Activated CD4-positive, alpha-beta memory T cell treated with anti-CD3 and anti-CD28 coated beads, Interleukin-2, amount 10 ng/mL, durations not matched to agents 7 days and 5 days (primary cell): ENCODE measurements at regions of chr10 and their contacts with region 1.

Region 1: DNA sequence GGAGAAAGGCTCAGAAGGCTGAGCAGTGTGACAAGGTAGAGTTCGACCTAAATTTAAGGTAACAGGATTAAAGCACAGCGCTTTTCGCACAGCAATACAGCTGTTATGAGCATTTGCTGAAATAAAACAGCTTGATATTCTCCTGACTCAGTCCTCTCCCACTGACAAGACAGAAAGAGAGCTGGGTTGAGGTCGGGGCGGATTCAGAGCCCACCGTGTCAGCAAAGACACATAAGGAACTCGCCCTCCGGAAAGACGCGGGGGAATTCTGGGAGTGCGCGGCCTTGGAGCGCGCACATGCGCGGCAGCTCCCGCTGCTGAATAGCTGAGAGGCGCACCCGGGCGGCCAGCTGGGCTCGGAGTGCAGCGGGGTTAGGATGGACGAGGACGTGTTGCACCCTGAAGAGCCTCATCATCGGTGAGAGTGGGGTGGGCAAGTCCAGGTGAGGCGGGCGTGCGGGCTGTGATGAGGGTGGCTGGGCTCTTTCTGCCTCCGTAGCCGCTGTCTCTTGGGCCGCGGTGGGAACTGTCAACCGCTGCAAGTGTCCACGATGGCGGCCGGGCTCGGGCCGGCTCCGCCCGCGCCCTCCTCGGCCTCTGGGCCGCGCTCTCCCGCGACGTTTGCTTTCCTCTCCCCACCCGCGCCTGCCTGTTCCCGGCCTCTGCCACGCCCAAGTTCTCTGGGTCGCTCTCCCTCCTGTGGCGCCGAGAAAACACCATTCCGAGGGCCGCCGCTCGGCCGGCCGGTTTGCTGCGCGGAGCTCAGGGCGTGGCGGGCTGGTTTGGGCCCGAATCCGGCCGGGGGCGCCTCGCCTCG is 120.6 kb downstream of the LYZL1 start:
- DNase-seq: peak; percentile 46
- H3K4me3 Mint-ChIP-seq: peak overlapping the region; percentile 83
- H3K27ac Mint-ChIP-seq: peak overlapping the region; percentile 83
- H3K4me1 Mint-ChIP-seq: peaks cover 28% of the 10 kb centered on the region
- H3K27me3 Mint-ChIP-seq: no peaks in the 10 kb centered on the region

Region 2: DNA sequence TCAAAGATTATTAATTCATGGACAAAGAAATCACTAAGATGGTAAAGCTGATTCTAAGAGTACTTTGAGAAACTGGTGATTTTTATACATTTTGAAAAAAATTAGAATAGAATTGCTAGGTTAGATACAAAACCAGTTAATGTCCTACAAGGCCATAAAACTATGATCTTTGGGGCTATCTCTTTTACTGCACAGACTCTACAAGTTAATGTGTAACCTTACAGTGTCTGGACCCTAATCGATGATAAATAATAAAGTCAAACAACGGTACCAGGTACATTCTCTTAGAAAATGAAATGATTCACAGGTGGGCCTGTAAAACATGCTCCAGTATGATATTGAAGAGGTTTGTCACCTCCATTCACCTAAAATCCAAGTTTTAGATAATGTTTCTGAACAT is 320.4 kb before region 1 on chr10:
- CTCF ChIA-PET with region 1: no interaction called
- POLR2A ChIA-PET with region 1: no interaction called
- DNase-seq: no peak
- H3K4me3 Mint-ChIP-seq: no peak overlapping the region
- H3K27ac Mint-ChIP-seq: no peak overlapping the region
- H3K4me1 Mint-ChIP-seq: no peaks in the 10 kb centered on the region
- H3K27me3 Mint-ChIP-seq: no peaks in the 10 kb centered on the region

Region 3: DNA sequence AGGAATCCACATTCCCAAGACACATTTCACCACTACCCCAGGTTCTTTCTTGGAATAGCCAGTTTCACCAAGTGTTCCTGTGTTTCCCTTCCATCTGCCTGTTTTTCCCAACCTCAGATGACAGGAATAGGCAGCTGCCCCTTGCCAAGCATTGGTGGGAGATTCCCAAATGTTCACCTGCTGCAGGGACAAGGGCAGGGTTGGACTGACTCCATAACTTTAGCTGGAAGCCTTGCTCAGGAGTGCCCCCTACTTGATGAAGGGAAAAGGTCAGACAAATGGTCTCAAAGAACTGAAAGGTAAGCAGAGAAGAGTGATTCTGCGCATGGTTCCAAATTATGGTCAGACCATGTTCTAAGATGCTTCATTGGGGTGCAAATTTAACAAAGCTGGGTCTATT is 165.7 kb before region 1 on chr10:
- CTCF ChIA-PET with region 1: no interaction called
- POLR2A ChIA-PET with region 1: no interaction called
- DNase-seq: no peak
- H3K4me3 Mint-ChIP-seq: no peak overlapping the region
- H3K27ac Mint-ChIP-seq: no peak overlapping the region
- H3K4me1 Mint-ChIP-seq: no peaks in the 10 kb centered on the region
- H3K27me3 Mint-ChIP-seq: no peaks in the 10 kb centered on the region

Region 4: DNA sequence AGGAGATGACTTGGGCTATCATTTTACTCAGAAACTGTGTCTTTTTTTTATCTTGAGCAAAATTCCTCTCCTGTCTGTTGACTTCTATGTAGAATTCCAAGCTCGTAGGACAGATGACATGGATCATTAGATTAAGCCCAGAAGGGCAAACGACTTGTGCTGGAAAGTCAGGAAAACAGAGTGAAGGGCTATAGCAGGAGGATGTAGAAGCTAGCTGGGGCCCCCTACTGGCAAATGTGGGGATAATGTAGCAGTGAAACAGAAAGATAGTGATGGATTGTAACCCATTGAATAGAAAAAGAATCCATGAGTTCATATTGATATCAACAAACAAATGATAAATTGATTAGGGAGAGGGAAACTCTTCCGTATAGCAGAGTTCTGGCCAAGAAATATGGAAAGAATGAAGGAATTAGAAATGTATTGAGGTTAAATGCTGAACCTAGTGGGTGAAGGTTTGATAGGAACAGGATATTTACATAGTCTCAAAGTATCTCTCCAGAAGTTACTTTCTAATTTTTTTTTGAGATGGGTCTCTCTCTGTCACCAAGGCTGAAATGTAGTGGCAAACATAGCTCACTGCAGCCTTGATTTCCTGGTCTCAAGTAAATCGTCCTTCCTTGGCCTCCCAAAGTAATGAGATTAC is 16.9 kb before region 1 on chr10:
- CTCF ChIA-PET with region 1: interaction called, 13 read pairs
- POLR2A ChIA-PET with region 1: no interaction called
- DNase-seq: peak; percentile 39
- H3K4me3 Mint-ChIP-seq: no peak overlapping the region
- H3K27ac Mint-ChIP-seq: no peak overlapping the region
- H3K4me1 Mint-ChIP-seq: no peaks in the 10 kb centered on the region
- H3K27me3 Mint-ChIP-seq: peaks cover 1% of the 10 kb centered on the region

Region 5: GRCh38 chr10:29420744-29421143 is 11.3 kb after region 1 on chr10:
- CTCF ChIA-PET with region 1: no interaction called
- POLR2A ChIA-PET with region 1: no interaction called
- DNase-seq: no peak
- H3K4me3 Mint-ChIP-seq: no peak overlapping the region
- H3K27ac Mint-ChIP-seq: no peak overlapping the region
- H3K4me1 Mint-ChIP-seq: no peaks in the 10 kb centered on the region
- H3K27me3 Mint-ChIP-seq: no peaks in the 10 kb centered on the region